Activated B cell treated with CpG ODN at 0.5 μM for 24 hours (primary cell): ENCODE measurements at regions of chr6 and their contacts with region 1.

Region 1: DNA sequence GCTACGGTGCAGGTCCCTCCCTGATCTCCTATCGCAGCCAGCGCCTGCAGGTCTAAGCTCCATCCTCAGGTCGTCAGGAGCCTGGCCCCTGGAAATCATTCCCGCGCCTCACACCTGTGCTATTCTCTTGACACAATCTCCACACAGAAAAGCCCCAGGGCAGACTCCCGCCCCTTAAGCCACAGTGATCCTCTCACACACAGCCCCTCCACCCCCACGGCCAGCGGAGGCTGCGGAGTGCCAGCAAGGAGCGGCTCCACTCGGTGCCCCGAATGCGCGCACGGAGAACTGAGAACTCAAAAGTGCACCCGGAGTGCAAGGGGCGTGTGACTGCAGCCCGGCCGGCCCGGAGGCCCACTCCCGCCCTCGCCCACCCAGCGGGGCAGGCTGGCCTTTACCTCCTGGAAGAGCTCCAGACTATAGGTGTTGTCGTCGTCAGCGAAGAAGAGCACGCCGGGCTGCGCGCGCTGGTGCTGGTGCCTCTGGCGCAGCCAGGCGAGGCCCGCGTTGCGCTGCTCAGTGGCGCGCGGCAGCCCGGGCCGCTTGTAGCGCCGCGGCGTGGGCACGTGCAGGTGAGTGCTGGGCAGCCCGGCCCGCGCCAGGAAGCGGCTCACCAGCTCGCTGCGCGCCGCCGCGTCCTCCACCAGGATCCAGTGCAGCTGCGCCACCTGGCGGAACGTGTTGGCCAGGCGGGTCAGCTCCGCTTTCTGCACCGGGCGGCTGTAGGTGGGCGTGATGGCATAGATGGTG is 1.2 kb downstream of the B3GAT2 start:
- DNase-seq: peak; percentile 79
- ATAC-seq: peak; percentile 90
- H3K4me3 Mint-ChIP-seq: peak overlapping the region; percentile 75
- H3K27ac Mint-ChIP-seq: no peak overlapping the region
- H3K4me1 Mint-ChIP-seq: peaks cover 21% of the 10 kb centered on the region
- H3K27me3 Mint-ChIP-seq: peaks cover 51% of the 10 kb centered on the region
- CTCF ChIP-seq: peak; percentile 41

Region 2: GRCh38 chr6:70221025-70221714 is 734.4 kb before region 1 on chr6:
- CTCF ChIA-PET with region 1: interaction called, 13 read pairs
- POLR2A ChIA-PET with region 1: no interaction called
- intact Hi-C with region 1: no loop called
- DNase-seq: no peak
- ATAC-seq: peak; percentile 68
- H3K4me3 Mint-ChIP-seq: no peak overlapping the region
- H3K27ac Mint-ChIP-seq: no peak overlapping the region
- H3K4me1 Mint-ChIP-seq: peaks cover 6% of the 10 kb centered on the region
- H3K27me3 Mint-ChIP-seq: peaks cover 3% of the 10 kb centered on the region
- CTCF ChIP-seq: no peak

Region 3: GRCh38 chr6:70310063-70310694 is 645.4 kb before region 1 on chr6:
- CTCF ChIA-PET with region 1: interaction called, 22 read pairs
- POLR2A ChIA-PET with region 1: no interaction called
- intact Hi-C with region 1: loop called (anchors 1 kb)
- DNase-seq: no peak
- ATAC-seq: no peak
- H3K4me3 Mint-ChIP-seq: no peak overlapping the region
- H3K27ac Mint-ChIP-seq: no peak overlapping the region
- H3K4me1 Mint-ChIP-seq: no peaks in the 10 kb centered on the region
- H3K27me3 Mint-ChIP-seq: peaks cover 11% of the 10 kb centered on the region
- CTCF ChIP-seq: no peak

Region 4: DNA sequence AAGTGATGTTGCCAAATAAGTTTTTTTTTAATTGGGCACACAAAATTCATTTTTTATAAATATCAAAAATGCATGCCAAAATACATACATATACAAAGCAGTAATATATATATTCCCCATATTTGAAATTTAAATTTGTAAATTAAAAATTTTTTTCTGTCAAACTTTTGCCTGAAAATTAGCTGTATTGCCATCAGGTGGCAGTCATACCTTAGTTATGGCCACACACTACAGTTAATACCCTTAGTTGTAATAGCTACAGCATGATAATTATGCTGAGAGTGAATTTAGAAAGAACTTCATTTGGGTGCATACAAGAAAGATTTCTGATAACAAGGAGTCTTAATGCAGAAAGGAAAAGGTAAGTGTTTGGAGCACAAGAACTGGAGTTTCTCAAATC is 435.0 kb before region 1 on chr6:
- CTCF ChIA-PET with region 1: interaction called, 12 read pairs
- POLR2A ChIA-PET with region 1: no interaction called
- intact Hi-C with region 1: loop called (anchors 1 kb)
- DNase-seq: no peak
- ATAC-seq: no peak
- H3K4me3 Mint-ChIP-seq: no peak overlapping the region
- H3K27ac Mint-ChIP-seq: no peak overlapping the region
- H3K4me1 Mint-ChIP-seq: no peaks in the 10 kb centered on the region
- H3K27me3 Mint-ChIP-seq: no peaks in the 10 kb centered on the region
- CTCF ChIP-seq: no peak

Region 5: DNA sequence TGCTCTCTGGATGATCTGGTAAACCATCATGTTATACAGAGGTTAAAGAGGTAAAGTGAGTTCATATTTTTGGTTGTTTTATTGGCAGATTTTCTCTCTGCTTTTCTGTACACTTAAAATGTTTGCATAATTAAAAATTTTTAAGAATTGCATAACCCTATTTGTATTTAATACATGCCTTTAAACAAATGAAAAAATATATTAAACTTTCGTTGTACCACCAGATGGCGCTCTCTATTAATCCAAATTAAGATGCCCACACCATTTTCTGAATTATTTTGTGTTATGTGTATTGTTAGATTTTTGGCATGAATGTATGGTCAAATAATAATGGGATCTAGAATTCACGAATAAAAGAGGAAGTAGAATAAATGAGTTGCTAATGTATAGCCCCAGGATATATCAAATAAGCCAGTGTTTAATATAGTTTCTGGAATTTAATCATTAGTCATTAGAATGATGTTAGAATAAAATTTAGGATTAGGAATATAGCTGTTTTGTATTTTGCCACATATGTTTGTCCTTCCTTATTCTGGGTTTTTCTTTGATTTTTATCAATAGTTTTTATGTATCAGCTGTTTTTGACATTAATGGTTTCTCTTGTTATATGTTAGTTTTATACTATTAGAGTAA is 249.0 kb before region 1 on chr6:
- CTCF ChIA-PET with region 1: interaction called, 38 read pairs
- POLR2A ChIA-PET with region 1: no interaction called
- intact Hi-C with region 1: loop called (anchors 1 kb)
- DNase-seq: no peak
- ATAC-seq: no peak
- H3K4me3 Mint-ChIP-seq: no peak overlapping the region
- H3K27ac Mint-ChIP-seq: no peak overlapping the region
- H3K4me1 Mint-ChIP-seq: peaks cover 21% of the 10 kb centered on the region
- H3K27me3 Mint-ChIP-seq: no peaks in the 10 kb centered on the region
- CTCF ChIP-seq: peak; percentile 69

Region 6: DNA sequence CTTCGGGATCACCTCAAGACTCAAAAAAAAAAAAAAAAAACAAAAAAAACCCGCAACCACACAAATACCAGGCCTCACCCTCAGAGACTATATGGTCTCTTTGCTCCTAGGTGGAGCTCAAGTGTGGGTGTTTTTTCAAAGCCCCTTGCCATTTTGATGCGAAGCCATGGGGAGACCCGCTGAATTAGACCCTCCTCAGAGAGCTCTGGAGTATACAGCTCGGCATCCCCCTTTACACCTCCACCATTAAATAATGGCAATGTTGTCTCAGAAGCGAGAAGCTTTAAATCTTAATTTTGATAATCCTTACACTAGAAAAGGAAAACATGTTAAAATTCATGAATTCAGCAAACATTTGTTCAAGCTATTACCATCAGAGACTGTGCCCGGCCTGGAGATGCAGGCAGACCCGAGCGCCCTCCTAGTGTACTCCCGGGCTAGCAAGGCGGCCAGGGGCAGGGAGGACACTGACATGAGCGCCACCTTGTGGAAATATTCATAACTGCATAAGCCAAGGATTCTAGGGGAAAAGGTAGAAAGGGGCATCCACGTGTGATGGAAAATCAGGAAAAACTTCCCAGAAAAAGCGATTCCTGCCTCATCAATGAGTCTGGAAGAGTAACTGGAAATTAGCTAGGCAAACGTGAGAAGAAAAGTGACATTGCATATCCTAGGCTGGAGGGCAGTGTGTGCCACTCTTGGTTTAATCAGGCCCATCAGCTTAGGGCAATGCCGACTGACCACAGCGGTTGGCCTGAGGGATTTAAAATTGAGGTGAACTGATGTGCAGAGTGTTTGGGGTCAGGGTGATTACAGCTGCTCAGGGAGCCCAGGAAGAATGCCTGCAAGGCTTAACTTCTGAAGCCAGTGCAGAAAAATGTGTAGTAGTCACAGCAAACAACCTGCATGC is 71.3 kb before region 1 on chr6:
- CTCF ChIA-PET with region 1: interaction called, 3 read pairs
- POLR2A ChIA-PET with region 1: interaction called, 11 read pairs
- intact Hi-C with region 1: loop called (anchors 2 kb)
- DNase-seq: no peak
- ATAC-seq: peak; percentile 85
- H3K4me3 Mint-ChIP-seq: no peak overlapping the region
- H3K27ac Mint-ChIP-seq: no peak overlapping the region
- H3K4me1 Mint-ChIP-seq: no peaks in the 10 kb centered on the region
- H3K27me3 Mint-ChIP-seq: peaks cover 12% of the 10 kb centered on the region
- CTCF ChIP-seq: peak; percentile 78

Region 7: GRCh38 chr6:71349395-71349794 is 393.8 kb after region 1 on chr6:
- CTCF ChIA-PET with region 1: interaction called, 3 read pairs
- POLR2A ChIA-PET with region 1: no interaction called
- intact Hi-C with region 1: loop called (anchors 2 kb)
- DNase-seq: no peak
- ATAC-seq: no peak
- H3K4me3 Mint-ChIP-seq: no peak overlapping the region
- H3K27ac Mint-ChIP-seq: no peak overlapping the region
- H3K4me1 Mint-ChIP-seq: peaks cover 19% of the 10 kb centered on the region
- H3K27me3 Mint-ChIP-seq: peaks cover under 1% of the 10 kb centered on the region
- CTCF ChIP-seq: peak; percentile 54